ENCODE measurements at regions of chrX and their contacts with region 1.

Region 1: DNA sequence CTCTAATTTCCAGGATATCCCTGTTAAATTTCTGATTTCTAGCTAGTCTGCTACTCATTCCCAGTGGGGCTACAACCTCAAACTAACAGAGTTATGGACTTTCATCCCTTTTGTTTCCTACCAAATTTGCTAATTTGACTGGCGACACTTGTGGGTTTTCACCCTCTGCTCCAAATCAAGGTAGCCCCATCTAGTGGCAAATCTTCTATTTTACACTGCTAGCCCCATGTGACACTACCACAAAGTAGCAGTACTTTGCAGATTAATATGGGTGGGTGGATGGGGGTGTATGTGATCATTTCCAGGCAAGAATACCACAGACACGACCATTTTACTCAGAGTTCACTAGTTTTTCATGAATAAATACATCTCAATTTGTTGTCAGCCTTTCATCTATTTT is 150.3 kb downstream of the MSL3 start:
- DNase-seq: peak; percentile 38
- H3K4me3 Mint-ChIP-seq: no peak overlapping the region
- H3K27ac Mint-ChIP-seq: no peak overlapping the region
- H3K4me1 Mint-ChIP-seq: peaks cover 9% of the 10 kb centered on the region
- H3K27me3 Mint-ChIP-seq: no peaks in the 10 kb centered on the region
- CTCF ChIP-seq: no peak

Region 2: GRCh38 chrX:11770320-11770719 is 138.1 kb before region 1 on chrX:
- CTCF ChIA-PET with region 1: no interaction called
- intact Hi-C with region 1: loop called (anchors 1 kb)
- DNase-seq: peak; percentile 9
- H3K4me3 Mint-ChIP-seq: no peak overlapping the region
- H3K27ac Mint-ChIP-seq: no peak overlapping the region
- H3K4me1 Mint-ChIP-seq: no peaks in the 10 kb centered on the region
- H3K27me3 Mint-ChIP-seq: no peaks in the 10 kb centered on the region
- CTCF ChIP-seq: peak; percentile 70

Region 3: GRCh38 chrX:12138361-12139313 is 230.3 kb after region 1 on chrX and contains the start of gene FRMPD4:
- CTCF ChIA-PET with region 1: no interaction called
- intact Hi-C with region 1: no loop called
- DNase-seq: no peak
- H3K4me3 Mint-ChIP-seq: peak within 1 kb of the TSS; percentile 26
- H3K27ac Mint-ChIP-seq: no peak within 1 kb of the TSS
- H3K4me1 Mint-ChIP-seq: no peaks in the 10 kb centered on the region
- H3K27me3 Mint-ChIP-seq: peaks cover 12% of the 10 kb centered on the region
- CTCF ChIP-seq: no peak
- total RNA-seq, gene FRMPD4: not detected in 2 replicates

Region 4: GRCh38 chrX:12245650-12246645 is 337.6 kb after region 1 on chrX:
- CTCF ChIA-PET with region 1: no interaction called
- intact Hi-C with region 1: no loop called
- DNase-seq: no peak
- H3K4me3 Mint-ChIP-seq: no peak overlapping the region
- H3K27ac Mint-ChIP-seq: no peak overlapping the region
- H3K4me1 Mint-ChIP-seq: no peaks in the 10 kb centered on the region
- H3K27me3 Mint-ChIP-seq: no peaks in the 10 kb centered on the region
- CTCF ChIP-seq: no peak

Region 5: DNA sequence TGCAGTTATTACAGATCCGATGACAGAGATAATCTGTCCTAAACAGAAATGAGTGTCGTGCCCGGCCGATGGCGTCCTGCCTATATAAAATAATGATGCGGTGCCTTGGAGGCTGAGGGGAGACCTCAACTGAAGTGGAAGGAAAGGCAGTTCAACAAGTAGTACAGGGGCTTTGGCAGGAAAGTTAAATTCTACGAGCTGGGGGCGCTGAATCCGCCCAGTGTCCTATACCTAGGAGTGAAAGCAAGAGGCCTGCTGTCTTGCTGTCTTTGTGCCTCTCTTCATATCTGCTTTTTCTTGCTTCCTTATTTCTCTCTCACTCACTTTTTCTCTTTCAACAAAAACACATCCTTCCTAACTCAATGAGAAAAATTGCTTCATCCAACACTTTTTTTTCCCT is 800.7 kb after region 1 on chrX:
- CTCF ChIA-PET with region 1: no interaction called
- intact Hi-C with region 1: no loop called
- DNase-seq: no peak
- H3K4me3 Mint-ChIP-seq: no peak overlapping the region
- H3K27ac Mint-ChIP-seq: no peak overlapping the region
- H3K4me1 Mint-ChIP-seq: no peaks in the 10 kb centered on the region
- H3K27me3 Mint-ChIP-seq: peaks cover 28% of the 10 kb centered on the region
- CTCF ChIP-seq: no peak